SK-N-SH (cell line): ENCODE measurements at regions of chr1 and their contacts with region 1.

Region 1: DNA sequence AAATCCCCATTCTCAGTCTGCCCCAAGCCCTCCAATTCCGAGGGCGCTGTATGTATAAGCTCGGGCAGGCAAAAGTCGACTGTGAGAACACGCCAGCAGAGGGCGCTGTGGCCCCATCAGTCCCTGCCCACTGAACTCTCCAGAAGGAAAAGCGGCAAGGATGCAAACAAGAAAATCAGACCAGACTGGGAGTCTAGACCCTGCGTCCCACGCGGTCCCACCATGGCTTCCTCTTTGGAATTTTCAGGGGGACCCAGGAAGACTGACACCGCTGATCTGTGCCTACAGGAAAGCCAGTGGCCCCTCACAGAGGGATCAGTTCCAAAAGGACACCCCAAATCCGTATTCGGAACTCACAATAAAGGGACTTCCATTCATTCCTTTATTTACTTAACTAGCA is 19.5 kb downstream of the TEX35 start:
- DNase-seq: peak; percentile 84
- H3K4me3 ChIP-seq: peak overlapping the region in 1 of 2 experiments; percentile 18; a peak in 1 of 4 replicates
- H3K27ac ChIP-seq: no peak overlapping the region
- H3K4me1 ChIP-seq: peaks cover 20 to 21% of the 10 kb centered on the region in 2 experiments; a peak in 3 of 4 replicates
- H3K27me3 ChIP-seq: no peaks in the 10 kb centered on the region
- CTCF ChIP-seq: peak; percentile 95
- EP300 ChIP-seq: no peak
- RAD21 ChIP-seq: peak; percentile 85

Region 2: DNA sequence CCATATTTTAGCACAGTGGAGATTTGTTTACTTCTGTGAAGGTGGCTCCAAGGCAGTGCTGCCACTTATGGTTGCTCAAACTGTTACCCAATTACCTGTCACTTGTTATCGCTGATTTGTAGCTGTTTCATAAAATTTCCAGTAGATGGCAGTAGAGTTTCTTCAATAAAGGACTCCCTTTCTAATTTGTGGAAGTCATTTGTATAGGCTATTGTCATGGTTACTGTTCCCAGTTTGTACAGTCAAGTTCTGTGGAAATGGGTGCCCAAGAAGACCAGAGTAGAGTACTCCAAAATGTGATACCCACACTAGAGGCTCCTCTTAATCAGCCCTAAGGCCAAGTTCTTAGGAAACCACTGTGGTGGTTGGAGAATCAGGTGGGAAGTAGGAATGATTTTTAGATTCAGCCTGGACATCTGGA is 221.7 kb before region 1 on chr1:
- CTCF ChIA-PET with region 1: interaction called, 68 read pairs
- POLR2A ChIA-PET with region 1: no interaction called
- DNase-seq: peak; percentile 50
- H3K4me3 ChIP-seq: no peak overlapping the region
- H3K27ac ChIP-seq: no peak overlapping the region
- H3K4me1 ChIP-seq: no peaks in the 10 kb centered on the region; a peak in 1 of 4 replicates
- H3K27me3 ChIP-seq: no peaks in the 10 kb centered on the region
- CTCF ChIP-seq: peak; percentile 85
- EP300 ChIP-seq: no peak
- RAD21 ChIP-seq: peak; percentile 85

Region 3: GRCh38 chr1:178501705-178502329 is 30.6 kb before region 1 on chr1:
- CTCF ChIA-PET with region 1: interaction called, 20 read pairs
- POLR2A ChIA-PET with region 1: no interaction called
- DNase-seq: peak; percentile 85
- H3K4me3 ChIP-seq: no peak overlapping the region; a peak in 1 of 4 replicates
- H3K27ac ChIP-seq: no peak overlapping the region
- H3K4me1 ChIP-seq: no peaks in the 10 kb centered on the region; a peak in 1 of 4 replicates
- H3K27me3 ChIP-seq: no peaks in the 10 kb centered on the region
- CTCF ChIP-seq: peak; percentile 91
- EP300 ChIP-seq: no peak
- RAD21 ChIP-seq: peak; percentile 69

Region 4: GRCh38 chr1:178542560-178543356 is 10.4 kb after region 1 on chr1:
- CTCF ChIA-PET with region 1: interaction called, 38 read pairs
- POLR2A ChIA-PET with region 1: no interaction called
- DNase-seq: peak; percentile 94
- H3K4me3 ChIP-seq: peak overlapping the region; percentile 83 to 96
- H3K27ac ChIP-seq: peak overlapping the region; percentile 78 to 90
- H3K4me1 ChIP-seq: peaks cover 26 to 31% of the 10 kb centered on the region in 2 experiments
- H3K27me3 ChIP-seq: no peaks in the 10 kb centered on the region
- CTCF ChIP-seq: peak; percentile 81
- EP300 ChIP-seq: 0 out of 4 replicates have a peak, but pooled peaks of 1 of the 2 experiments have one; percentile 13
- RAD21 ChIP-seq: peak; percentile 77

Region 5: GRCh38 chr1:178774263-178774662 is 241.9 kb after region 1 on chr1:
- CTCF ChIA-PET with region 1: interaction called, 12 read pairs
- POLR2A ChIA-PET with region 1: no interaction called
- DNase-seq: peak; percentile 22
- H3K4me3 ChIP-seq: no peak overlapping the region
- H3K27ac ChIP-seq: no peak overlapping the region
- H3K4me1 ChIP-seq: no peaks in the 10 kb centered on the region
- H3K27me3 ChIP-seq: no peaks in the 10 kb centered on the region
- CTCF ChIP-seq: peak; percentile 61
- EP300 ChIP-seq: no peak
- RAD21 ChIP-seq: peak; percentile 61